ENCODE measurements at regions of chr5 and their contacts with region 1.

Region 1: GRCh38 chr5:37043688-37044087 is 167.1 kb downstream of the NIPBL start:
- DNase-seq: no peak
- H3K4me3 ChIP-seq: no peak overlapping the region
- H3K27ac ChIP-seq: no peak overlapping the region
- H3K4me1 ChIP-seq: no peaks in the 10 kb centered on the region
- H3K27me3 ChIP-seq: no peaks in the 10 kb centered on the region
- CTCF ChIP-seq: no peak

Region 2: GRCh38 chr5:36988396-36988795 is 55.3 kb before region 1 on chr5:
- CTCF ChIA-PET with region 1: no interaction called
- POLR2A ChIA-PET with region 1: interaction called, 10 read pairs
- intact Hi-C with region 1: no loop called
- DNase-seq: no peak
- H3K4me3 ChIP-seq: no peak overlapping the region
- H3K27ac ChIP-seq: no peak overlapping the region
- H3K4me1 ChIP-seq: no peaks in the 10 kb centered on the region
- H3K27me3 ChIP-seq: no peaks in the 10 kb centered on the region
- CTCF ChIP-seq: no peak

Region 3: GRCh38 chr5:37184748-37185364 is 141.2 kb after region 1 on chr5:
- CTCF ChIA-PET with region 1: no interaction called
- POLR2A ChIA-PET with region 1: interaction called, 10 read pairs
- intact Hi-C with region 1: no loop called
- DNase-seq: no peak
- H3K4me3 ChIP-seq: no peak overlapping the region
- H3K27ac ChIP-seq: no peak overlapping the region
- H3K4me1 ChIP-seq: no peaks in the 10 kb centered on the region
- H3K27me3 ChIP-seq: no peaks in the 10 kb centered on the region
- CTCF ChIP-seq: no peak

Region 4: DNA sequence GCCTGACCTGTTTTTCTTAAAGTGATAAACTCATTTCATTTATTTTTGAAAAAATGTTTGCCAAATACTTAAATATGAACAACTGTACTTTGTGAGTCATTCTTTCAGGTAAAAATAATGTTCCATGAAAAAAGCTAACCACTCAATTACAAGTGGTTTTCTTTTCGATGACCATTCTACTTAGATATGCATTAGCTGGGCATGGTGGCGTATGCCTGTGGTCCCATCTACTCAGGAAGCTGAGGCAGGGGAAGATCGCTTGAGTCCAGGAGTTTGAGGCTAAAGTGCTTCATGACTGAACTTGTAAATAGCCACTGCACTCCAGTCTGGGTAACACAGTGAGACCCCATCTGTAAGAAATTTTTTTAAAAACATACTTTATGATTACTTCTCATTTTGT is 331.4 kb after region 1 on chr5:
- CTCF ChIA-PET with region 1: no interaction called
- POLR2A ChIA-PET with region 1: no interaction called
- intact Hi-C with region 1: no loop called
- DNase-seq: no peak
- H3K4me3 ChIP-seq: no peak overlapping the region
- H3K27ac ChIP-seq: no peak overlapping the region
- H3K4me1 ChIP-seq: peaks cover 5% of the 10 kb centered on the region
- H3K27me3 ChIP-seq: no peaks in the 10 kb centered on the region
- CTCF ChIP-seq: no peak

Region 5: DNA sequence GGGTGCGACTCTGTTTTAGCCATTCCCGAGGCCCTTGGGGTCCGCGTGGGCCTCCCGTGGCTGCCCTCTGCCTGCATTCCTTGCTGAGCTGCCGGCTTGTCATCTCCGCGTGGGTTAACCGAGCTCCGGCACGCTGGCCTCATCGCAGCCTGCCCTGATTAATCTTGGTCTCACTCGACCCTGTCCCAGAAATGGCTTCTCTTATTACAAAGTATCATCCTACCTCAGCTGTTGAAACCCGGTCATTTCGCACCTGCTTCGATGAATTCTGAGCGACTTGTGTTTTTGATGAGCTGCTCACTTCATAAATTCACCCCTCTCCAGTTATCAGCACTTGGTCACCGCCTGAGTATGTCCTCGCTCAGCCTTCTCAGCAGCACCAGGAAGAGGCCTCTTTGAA is 1091.1 kb after region 1 on chr5:
- CTCF ChIA-PET with region 1: no interaction called
- POLR2A ChIA-PET with region 1: no interaction called
- intact Hi-C with region 1: no loop called
- DNase-seq: no peak
- H3K4me3 ChIP-seq: no peak overlapping the region
- H3K27ac ChIP-seq: no peak overlapping the region
- H3K4me1 ChIP-seq: no peaks in the 10 kb centered on the region
- H3K27me3 ChIP-seq: peaks cover 62% of the 10 kb centered on the region
- CTCF ChIP-seq: no peak

Region 6: DNA sequence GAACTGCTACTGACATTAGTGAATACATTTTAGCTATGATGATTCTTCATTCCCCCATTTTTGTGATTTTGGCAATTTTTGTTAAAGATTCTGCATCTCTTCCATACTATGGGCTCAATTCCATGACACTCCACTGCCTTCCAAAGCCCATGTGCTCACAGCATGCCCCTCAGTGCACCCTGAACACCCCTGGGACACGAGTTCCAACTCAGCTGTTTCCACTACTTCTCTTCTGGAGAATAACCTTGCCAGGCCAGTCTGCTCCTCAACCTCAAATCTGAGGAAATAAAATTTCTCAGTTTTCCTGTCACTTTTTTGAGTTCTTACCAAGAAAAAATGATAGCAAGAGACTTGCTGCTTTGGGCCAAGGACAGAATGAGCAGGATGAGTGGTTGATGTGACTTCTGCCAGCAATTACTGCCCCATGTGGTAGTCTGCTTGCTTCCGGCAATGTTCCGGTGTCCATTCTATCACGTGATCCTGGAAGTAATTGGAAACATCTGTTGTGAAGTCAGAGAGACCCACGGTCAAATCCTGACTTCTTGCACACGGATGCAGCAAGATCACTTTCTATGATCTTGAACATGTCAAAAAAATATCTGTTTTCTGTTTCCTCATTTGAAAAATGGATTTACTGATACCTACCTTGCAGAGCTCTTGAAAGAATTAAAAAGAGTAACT is 1273.0 kb after region 1 on chr5:
- CTCF ChIA-PET with region 1: no interaction called
- POLR2A ChIA-PET with region 1: no interaction called
- intact Hi-C with region 1: no loop called
- DNase-seq: no peak
- H3K4me3 ChIP-seq: no peak overlapping the region
- H3K27ac ChIP-seq: no peak overlapping the region
- H3K4me1 ChIP-seq: no peaks in the 10 kb centered on the region
- H3K27me3 ChIP-seq: peaks cover 27% of the 10 kb centered on the region
- CTCF ChIP-seq: no peak

Measured in PC-9 (cell line).